Left ventricle myocardium inferior (tissue), 1 donor: ENCODE measurements at regions of chr2 and their contacts with region 1.

Region 1: DNA sequence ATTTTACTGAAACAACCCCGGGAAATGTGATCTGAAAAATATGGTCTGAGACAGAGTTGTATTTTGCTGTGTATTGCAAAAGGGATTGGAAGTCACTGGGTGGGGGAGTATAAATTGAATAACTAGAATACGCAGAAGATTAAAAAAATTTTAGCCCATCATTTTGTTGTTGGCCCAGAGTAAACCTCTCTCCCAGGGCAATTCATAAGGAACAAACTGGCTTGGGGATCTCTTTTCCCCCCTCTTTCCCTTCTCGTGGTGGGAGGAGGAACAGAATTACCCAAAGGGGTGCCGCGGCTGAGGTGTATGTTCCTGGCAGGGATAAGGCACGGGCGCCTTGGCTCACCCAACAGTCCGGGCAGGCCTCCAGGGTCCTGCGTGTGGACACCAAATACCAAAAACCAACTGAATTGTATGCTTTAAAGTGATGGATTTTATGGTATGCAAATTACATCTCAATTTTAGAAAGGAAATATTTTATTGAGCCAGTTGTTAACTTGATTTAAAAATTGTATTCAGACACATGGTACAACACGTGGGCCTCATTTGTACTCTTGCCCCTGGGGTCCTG is 121.2 kb upstream of the SPRED2 start:
- DNase-seq: no peak
- H3K4me3 ChIP-seq: no peak overlapping the region
- H3K27ac ChIP-seq: no peak overlapping the region
- H3K4me1 ChIP-seq: peaks cover 5% of the 10 kb centered on the region
- H3K27me3 ChIP-seq: peaks cover 4% of the 10 kb centered on the region
- CTCF ChIP-seq: peak; percentile 5

Region 2: GRCh38 chr2:65264821-65265670 is 288.5 kb before region 1 on chr2:
- intact Hi-C with region 1: loop called (anchors 2 kb)
- DNase-seq: no peak
- H3K4me3 ChIP-seq: no peak overlapping the region
- H3K27ac ChIP-seq: no peak overlapping the region
- H3K4me1 ChIP-seq: peaks cover 34% of the 10 kb centered on the region
- H3K27me3 ChIP-seq: no peaks in the 10 kb centered on the region
- CTCF ChIP-seq: peak; percentile 80

Region 3: DNA sequence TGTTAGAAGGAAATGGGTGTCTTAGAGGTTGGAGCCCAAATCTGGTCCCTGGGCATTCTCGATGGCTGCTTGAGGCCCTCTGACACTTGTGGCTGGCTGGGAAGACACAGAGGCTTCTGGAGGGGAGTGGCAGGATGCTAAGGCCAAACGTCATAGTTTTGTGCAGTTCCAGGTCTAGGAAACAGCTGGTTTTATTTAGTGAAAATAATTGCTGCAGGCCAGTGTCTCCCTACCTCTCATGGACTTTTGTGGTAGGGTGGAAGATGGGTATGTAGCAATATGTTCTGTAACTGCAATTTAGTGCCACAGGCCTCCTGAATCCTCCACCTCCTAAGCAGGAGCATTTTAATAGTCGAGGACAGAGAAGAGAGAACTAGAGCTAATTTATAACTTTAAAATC is 89.0 kb before region 1 on chr2:
- intact Hi-C with region 1: no loop called
- DNase-seq: peak; percentile 19
- H3K4me3 ChIP-seq: no peak overlapping the region
- H3K27ac ChIP-seq: peak overlapping the region; percentile 64
- H3K4me1 ChIP-seq: peaks cover 23% of the 10 kb centered on the region
- H3K27me3 ChIP-seq: peaks cover under 1% of the 10 kb centered on the region
- CTCF ChIP-seq: no peak

Region 4: GRCh38 chr2:65514555-65515195 is 38.9 kb before region 1 on chr2:
- intact Hi-C with region 1: no loop called
- DNase-seq: no peak
- H3K4me3 ChIP-seq: no peak overlapping the region
- H3K27ac ChIP-seq: no peak overlapping the region
- H3K4me1 ChIP-seq: no peaks in the 10 kb centered on the region
- H3K27me3 ChIP-seq: peaks cover 7% of the 10 kb centered on the region
- CTCF ChIP-seq: no peak